Calu3 (cell line): ENCODE measurements at regions of chr4 and their contacts with region 1.

Region 1: DNA sequence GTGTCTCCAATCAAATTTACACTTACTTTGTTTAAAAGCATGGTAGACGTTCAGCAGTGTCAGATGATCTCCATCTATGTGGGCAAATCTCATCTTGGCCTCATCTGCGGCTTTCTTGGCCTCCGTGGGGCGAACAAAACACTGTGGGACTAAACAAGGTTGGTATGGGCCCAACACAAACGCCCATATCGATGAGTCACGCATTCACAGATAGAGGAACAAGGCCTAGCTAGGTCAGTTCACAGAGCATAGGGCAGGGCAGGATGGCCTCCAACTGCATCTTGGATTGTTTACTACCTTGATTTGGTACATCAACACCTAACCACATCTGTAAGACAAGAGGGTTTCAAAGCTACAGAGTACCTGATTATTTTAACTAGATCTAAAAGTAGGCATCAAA is 47.3 kb downstream of the DHX15 start:
- DNase-seq: no peak
- H3K4me3 Mint-ChIP-seq: no peak overlapping the region
- H3K27ac Mint-ChIP-seq: no peak overlapping the region
- H3K4me1 Mint-ChIP-seq: no peaks in the 10 kb centered on the region
- H3K27me3 Mint-ChIP-seq: no peaks in the 10 kb centered on the region
- CTCF ChIP-seq: no peak

Region 2: DNA sequence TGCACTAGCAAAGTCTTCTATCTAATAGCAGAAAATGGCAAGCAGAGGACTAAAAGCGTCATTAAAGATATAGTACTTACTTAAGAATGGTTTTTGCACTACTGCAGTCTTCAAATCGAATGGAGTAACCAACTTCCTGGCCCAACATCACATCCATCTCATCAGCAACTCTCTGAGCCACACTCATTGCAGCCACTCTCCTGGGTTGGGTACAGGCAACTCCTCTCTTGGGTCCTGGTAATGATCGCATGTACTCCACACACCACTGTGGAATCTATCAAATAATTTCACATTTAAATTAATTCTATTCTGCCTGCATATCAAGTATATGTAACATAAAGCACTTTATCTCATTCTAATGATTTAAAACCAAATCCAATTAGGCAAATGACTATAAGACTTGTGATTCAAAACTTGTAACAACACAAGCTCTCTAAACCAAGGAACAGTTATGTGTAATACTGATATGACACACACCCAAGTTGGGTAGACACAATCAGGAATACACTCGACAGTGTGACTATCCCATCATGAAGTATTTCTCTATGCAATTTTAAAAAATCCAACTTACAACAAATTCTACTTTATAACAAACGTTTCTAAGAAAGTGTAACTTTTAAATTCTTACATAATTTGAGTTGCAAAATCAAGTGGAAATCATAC is 33.7 kb after region 1 on chr4:
- CTCF ChIA-PET with region 1: no interaction called
- intact Hi-C with region 1: loop called (anchors 5 kb)
- DNase-seq: no peak
- H3K4me3 Mint-ChIP-seq: peak overlapping the region; percentile 9
- H3K27ac Mint-ChIP-seq: no peak overlapping the region
- H3K4me1 Mint-ChIP-seq: peaks cover 52% of the 10 kb centered on the region
- H3K27me3 Mint-ChIP-seq: no peaks in the 10 kb centered on the region
- CTCF ChIP-seq: no peak